Sciatic nerve (tissue), 2 donors: ENCODE measurements at regions of chr20 and their contacts with region 1.

Region 1: DNA sequence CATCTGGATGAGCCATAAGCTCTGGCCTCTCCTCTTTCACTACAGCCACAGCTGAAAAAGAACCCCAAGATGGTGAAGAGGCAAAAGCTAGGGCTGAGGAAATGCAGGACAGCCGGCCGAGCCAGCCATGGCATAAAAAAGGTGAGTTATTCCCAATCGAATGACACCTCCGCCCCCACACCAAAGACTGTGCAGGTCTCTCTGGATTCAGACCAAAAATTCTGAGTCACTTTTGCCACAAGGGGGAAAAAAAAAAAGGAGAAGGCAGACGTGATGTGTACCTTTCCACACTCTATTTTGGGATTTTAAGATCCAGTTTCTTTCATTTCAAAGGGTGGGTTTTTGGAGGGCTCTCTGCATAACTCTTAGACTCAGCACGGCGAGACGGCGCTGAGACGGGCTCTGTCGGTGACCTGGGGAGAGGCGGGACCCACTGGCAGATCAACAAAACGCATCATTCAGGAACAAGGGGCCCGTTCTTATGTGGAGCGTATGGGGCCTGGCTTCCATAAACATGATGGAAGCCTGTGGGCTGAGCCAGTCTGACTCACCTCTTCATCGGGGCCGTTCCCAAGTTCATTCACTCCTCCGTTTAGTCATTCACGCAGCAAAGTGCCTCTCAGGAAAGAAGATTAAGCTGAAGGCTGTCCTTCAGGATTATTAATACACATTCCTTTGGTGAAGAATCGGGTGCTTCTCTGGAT is 54.8 kb downstream of the NFATC2 start:
- DNase-seq: peak; percentile 59
- ATAC-seq: no peak

Region 2: GRCh38 chr20:51541189-51542032 is 53.7 kb after region 1 on chr20:
- intact Hi-C with region 1: loop called (anchors 10 kb)
- DNase-seq: peak; percentile 84
- ATAC-seq: peak; percentile 90